CD4-positive, alpha-beta memory T cell (primary cell): ENCODE measurements at regions of chr11 and their contacts with region 1.

Region 1: DNA sequence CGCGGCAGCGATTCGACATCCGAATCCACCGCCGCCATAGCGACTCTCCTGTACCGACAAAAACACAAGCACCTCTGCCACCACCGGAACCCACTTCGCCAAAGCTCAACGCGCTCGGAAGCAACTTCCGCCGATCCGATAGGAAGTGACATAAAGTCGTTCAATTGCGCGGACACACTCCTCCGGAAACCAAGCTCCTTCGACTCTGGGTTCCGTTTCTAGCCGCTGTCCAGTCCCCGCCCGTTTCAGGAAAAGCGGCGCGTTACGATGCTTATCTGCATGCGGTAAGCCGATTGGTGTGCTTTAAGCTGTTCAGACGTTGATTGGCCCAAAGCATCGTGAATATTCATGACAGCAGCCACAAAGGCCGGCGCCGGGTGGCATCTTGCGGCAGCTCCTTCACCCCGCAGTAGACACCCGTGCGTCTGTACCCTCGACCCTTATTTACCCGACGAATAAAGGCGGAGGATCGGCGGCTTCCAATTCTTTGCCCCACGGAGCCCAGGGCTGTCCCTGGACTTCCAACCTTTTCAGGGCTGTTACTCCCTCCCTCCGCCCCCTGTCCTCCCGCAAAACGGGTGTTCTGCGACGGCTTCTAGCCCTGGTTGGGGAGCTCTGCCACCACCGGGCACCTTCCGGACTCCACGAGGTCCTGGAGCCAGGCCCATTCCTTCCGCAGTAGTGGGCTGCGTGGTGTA is at the start of gene TUT1:
- DNase-seq: peak; percentile 96 to 98 (median 98)
- H3K4me3 ChIP-seq: peak within 1 kb of the TSS; percentile 69 to 87
- H3K4me3 Mint-ChIP-seq: peak within 1 kb of the TSS; percentile 89 to 98 (median 95)
- H3K27ac ChIP-seq: peak within 1 kb of the TSS; percentile 87
- H3K27ac Mint-ChIP-seq: peak within 1 kb of the TSS; percentile 87 to 98 (median 98)
- H3K4me1 ChIP-seq: peaks cover 43% of the 10 kb centered on the region
- H3K4me1 Mint-ChIP-seq: peaks cover 26 to 69% (median 44%) of the 10 kb centered on the region in 4 donors
- H3K27me3 ChIP-seq: no peaks in the 10 kb centered on the region
- H3K27me3 Mint-ChIP-seq: no peaks in the 10 kb centered on the region
- total RNA-seq, gene TUT1: 37.7 to 38.1 TPM

Region 2: DNA sequence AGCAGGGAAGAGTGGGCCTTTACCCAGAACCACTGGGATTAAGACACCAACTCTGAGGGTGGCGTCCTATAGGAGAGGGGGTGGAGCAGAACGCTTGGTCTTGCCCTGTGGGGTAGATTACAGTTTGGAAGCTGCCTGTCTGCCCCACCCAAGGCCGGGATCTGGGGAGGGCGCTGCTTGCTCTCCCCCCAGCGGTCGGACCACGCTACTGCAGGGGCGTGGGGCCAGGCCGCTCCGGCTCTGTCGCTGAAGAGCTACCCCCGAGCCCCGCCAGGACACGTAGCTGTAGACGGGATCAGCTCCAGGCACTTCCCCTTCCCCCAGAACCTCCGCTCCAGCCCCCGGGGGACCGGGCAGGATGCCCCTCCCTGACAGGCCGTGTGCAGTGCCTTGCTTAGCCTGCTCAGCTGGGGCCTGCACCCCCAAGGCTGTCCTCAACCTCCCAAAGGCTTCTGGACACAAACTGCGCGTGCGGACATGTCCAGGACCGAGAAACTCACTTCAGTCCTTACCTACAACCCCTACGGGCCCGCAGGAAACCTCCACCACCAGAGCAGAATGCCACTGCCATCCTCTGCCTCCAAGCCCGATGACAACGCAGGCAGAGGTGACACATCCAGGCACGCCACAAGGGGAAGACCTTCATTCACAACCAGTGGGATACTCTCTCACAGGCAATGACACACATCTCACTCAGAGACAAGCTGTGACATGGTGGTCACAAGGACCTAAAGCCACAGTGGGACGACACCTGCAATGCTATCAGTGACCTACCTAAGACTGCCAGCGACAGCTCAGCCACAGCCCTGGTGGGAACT is 48.6 kb before region 1 on chr11:
- CTCF ChIA-PET with region 1: interaction called, 7 read pairs
- POLR2A ChIA-PET with region 1: interaction called, 15 read pairs
- intact Hi-C with region 1: no loop called
- DNase-seq: peak; percentile 71 to 92 (median 71)
- H3K4me3 ChIP-seq: peak overlapping the region; percentile 91 to 94
- H3K4me3 Mint-ChIP-seq: peak overlapping the region; percentile 97 to 99 (median 98)
- H3K27ac ChIP-seq: peak overlapping the region; percentile 97
- H3K27ac Mint-ChIP-seq: peak overlapping the region; percentile 94 to 99 (median 98)
- H3K4me1 ChIP-seq: peaks cover 77% of the 10 kb centered on the region
- H3K4me1 Mint-ChIP-seq: peaks cover 48 to 88% (median 63%) of the 10 kb centered on the region in 4 donors
- H3K27me3 ChIP-seq: no peaks in the 10 kb centered on the region
- H3K27me3 Mint-ChIP-seq: no peaks in the 10 kb centered on the region

Region 3: DNA sequence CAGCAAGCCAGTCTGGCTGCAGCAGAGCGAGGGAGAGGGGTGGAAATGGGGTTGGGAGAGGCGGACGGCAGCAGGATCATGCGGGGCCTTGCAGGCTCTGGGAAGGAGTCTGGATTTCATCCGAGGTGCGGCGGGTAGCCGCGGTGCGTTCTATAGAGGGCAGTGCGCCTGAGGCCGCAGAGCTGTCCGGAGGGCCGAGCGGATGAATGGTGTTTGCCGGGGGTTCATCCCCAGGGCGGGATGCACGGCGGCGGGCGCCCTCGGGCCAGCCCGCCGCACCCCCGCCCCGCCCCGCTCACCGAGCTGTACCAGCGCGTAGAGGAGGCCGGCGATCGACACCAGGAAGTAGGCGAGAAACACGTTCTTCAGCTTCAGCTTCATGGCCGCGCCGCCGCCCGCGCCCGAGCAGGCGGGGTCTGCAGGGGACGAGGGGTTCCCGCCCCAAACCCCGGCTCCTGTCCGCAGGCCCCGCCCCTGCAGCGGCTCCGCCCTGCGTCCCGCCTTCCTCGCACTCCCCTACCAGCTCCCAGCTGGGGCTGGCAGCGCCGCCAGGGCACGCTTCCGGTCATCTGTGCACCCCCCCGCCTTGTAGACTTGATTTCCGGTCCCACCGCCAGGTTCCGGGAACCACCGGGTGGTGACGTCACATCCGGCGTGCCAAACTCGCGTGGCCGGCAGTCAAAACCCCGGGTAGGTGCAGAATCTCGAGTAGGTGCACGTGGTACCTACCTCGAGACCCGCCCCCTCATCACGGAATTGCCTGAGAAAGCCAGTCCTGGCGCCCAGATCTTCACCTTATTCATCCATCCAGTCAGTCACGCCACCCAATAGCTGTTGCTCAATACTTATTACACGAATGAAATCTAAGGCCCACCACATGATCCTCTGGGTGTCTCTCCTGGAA is 30.2 kb after region 1 on chr11 and contains the start of gene B3GAT3:
- CTCF ChIA-PET with region 1: interaction called, 23 read pairs
- POLR2A ChIA-PET with region 1: interaction called, 114 read pairs
- intact Hi-C with region 1: loop called (anchors 1 kb)
- DNase-seq: peak; percentile 95 to 99 (median 96)
- H3K4me3 ChIP-seq: peak within 1 kb of the TSS; percentile 83 to 89
- H3K4me3 Mint-ChIP-seq: peak within 1 kb of the TSS; percentile 89 to 98 (median 95)
- H3K27ac ChIP-seq: peak within 1 kb of the TSS; percentile 94
- H3K27ac Mint-ChIP-seq: peak within 1 kb of the TSS; percentile 91 to 99 (median 98)
- H3K4me1 ChIP-seq: peaks cover 26% of the 10 kb centered on the region
- H3K4me1 Mint-ChIP-seq: peaks cover 19 to 29% (median 20%) of the 10 kb centered on the region in 4 donors
- H3K27me3 ChIP-seq: no peaks in the 10 kb centered on the region
- H3K27me3 Mint-ChIP-seq: no peaks in the 10 kb centered on the region
- total RNA-seq, gene B3GAT3: 66.3 to 74.3 TPM

Region 4: GRCh38 chr11:62671575-62672389 is 80.2 kb after region 1 on chr11 and contains the starts of genes LBHD1 and UQCC3:
- CTCF ChIA-PET with region 1: interaction called, 86 read pairs
- POLR2A ChIA-PET with region 1: interaction called, 494 read pairs
- intact Hi-C with region 1: no loop called
- DNase-seq: peak; percentile 68 to 80 (median 75)
- H3K4me3 ChIP-seq: peak within 1 kb of the TSS; percentile 91 to 97
- H3K4me3 Mint-ChIP-seq: peak within 1 kb of the TSS; percentile 93 to 99 (median 99)
- H3K27ac ChIP-seq: peak within 1 kb of the TSS; percentile 74
- H3K27ac Mint-ChIP-seq: peak within 1 kb of the TSS; percentile 89 to 98 (median 97)
- H3K4me1 ChIP-seq: peaks cover 55% of the 10 kb centered on the region
- H3K4me1 Mint-ChIP-seq: peaks cover 14 to 74% (median 43%) of the 10 kb centered on the region in 4 donors
- H3K27me3 ChIP-seq: no peaks in the 10 kb centered on the region
- H3K27me3 Mint-ChIP-seq: no peaks in the 10 kb centered on the region
- total RNA-seq, gene LBHD1: 26.7 to 28.6 TPM
- total RNA-seq, gene UQCC3: 7.2 to 8.5 TPM

Region 5: GRCh38 chr11:62753736-62754603 is 162.4 kb after region 1 on chr11 and contains the start of gene ZBTB3:
- CTCF ChIA-PET with region 1: interaction called, 5 read pairs
- POLR2A ChIA-PET with region 1: interaction called, 37 read pairs
- intact Hi-C with region 1: no loop called
- DNase-seq: peak; percentile 99
- H3K4me3 ChIP-seq: peak within 1 kb of the TSS; percentile 68 to 98
- H3K4me3 Mint-ChIP-seq: peak within 1 kb of the TSS; percentile 96 to 99 (median 98)
- H3K27ac ChIP-seq: peak within 1 kb of the TSS; percentile 90
- H3K27ac Mint-ChIP-seq: peak within 1 kb of the TSS; percentile 94 to 100 (median 99)
- H3K4me1 ChIP-seq: peaks cover 45% of the 10 kb centered on the region
- H3K4me1 Mint-ChIP-seq: peaks cover 15 to 41% (median 25%) of the 10 kb centered on the region in 4 donors
- H3K27me3 ChIP-seq: no peaks in the 10 kb centered on the region
- H3K27me3 Mint-ChIP-seq: no peaks in the 10 kb centered on the region
- total RNA-seq, gene ZBTB3: 27.2 to 27.9 TPM

Region 6: GRCh38 chr11:62841361-62842184 is 250.0 kb after region 1 on chr11:
- CTCF ChIA-PET with region 1: no interaction called
- POLR2A ChIA-PET with region 1: interaction called, 55 read pairs
- intact Hi-C with region 1: no loop called
- DNase-seq: peak; percentile 88 to 92 (median 90)
- H3K4me3 ChIP-seq: peak overlapping the region; percentile 74 to 86
- H3K4me3 Mint-ChIP-seq: no peak overlapping the region
- H3K27ac ChIP-seq: peak overlapping the region; percentile 98
- H3K27ac Mint-ChIP-seq: no peak overlapping the region
- H3K4me1 ChIP-seq: peaks cover 32% of the 10 kb centered on the region
- H3K4me1 Mint-ChIP-seq: peaks cover 10 to 34% (median 21%) of the 10 kb centered on the region in 4 donors
- H3K27me3 ChIP-seq: no peaks in the 10 kb centered on the region
- H3K27me3 Mint-ChIP-seq: no peaks in the 10 kb centered on the region